CD4-positive, alpha-beta memory T cell (primary cell): ENCODE measurements at regions of chr3 and their contacts with region 1.

Region 1: GRCh38 chr3:56702490-56703315 is 19.6 kb upstream of the TASOR start:
- DNase-seq: peak; percentile 57 to 70 (median 66)
- H3K4me3 ChIP-seq: no peak overlapping the region
- H3K4me3 Mint-ChIP-seq: no peak overlapping the region
- H3K27ac ChIP-seq: no peak overlapping the region
- H3K27ac Mint-ChIP-seq: peak overlapping the region in 3 of 7 donors; percentile 15 to 42 (median 32)
- H3K4me1 ChIP-seq: peaks cover 16% of the 10 kb centered on the region
- H3K4me1 Mint-ChIP-seq: peaks cover 11 to 21% (median 13%) of the 10 kb centered on the region in 4 donors
- H3K27me3 ChIP-seq: no peaks in the 10 kb centered on the region
- H3K27me3 Mint-ChIP-seq: no peaks in the 10 kb centered on the region

Region 2: DNA sequence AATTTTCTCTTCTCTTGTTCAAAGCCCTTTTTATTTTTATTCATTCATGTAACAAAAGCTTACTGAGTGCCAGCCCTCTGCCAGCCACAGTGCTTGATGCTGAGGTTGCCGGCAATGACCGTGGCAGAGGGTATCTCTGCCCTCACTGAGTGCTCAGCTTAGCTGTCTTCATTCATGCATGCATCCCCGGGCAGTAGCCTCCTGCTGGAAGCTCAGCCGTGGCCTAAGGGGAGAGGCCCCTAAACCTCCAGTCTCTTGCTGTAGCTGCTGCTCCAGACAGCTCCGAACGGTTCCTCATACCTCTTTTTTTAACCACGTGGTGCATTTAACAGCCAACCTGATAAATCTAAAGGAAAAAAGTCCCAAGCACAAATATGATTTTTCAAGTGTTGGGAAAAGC is 180.3 kb before region 1 on chr3:
- CTCF ChIA-PET with region 1: no interaction called
- POLR2A ChIA-PET with region 1: no interaction called
- intact Hi-C with region 1: no loop called
- DNase-seq: no peak
- H3K4me3 ChIP-seq: no peak overlapping the region
- H3K4me3 Mint-ChIP-seq: no peak overlapping the region
- H3K27ac ChIP-seq: no peak overlapping the region
- H3K27ac Mint-ChIP-seq: no peak overlapping the region
- H3K4me1 ChIP-seq: no peaks in the 10 kb centered on the region
- H3K4me1 Mint-ChIP-seq: no peaks in the 10 kb centered on the region
- H3K27me3 ChIP-seq: no peaks in the 10 kb centered on the region
- H3K27me3 Mint-ChIP-seq: peaks cover 6 to 12% of the 10 kb centered on the region in 2 donors

Region 3: GRCh38 chr3:56682462-56683121 is 20.1 kb before region 1 on chr3:
- CTCF ChIA-PET with region 1: interaction called, 5 read pairs
- POLR2A ChIA-PET with region 1: interaction called, 10 read pairs
- intact Hi-C with region 1: loop called (anchors 2 kb)
- DNase-seq: peak; percentile 79 to 86 (median 85)
- H3K4me3 ChIP-seq: peak overlapping the region; percentile 76 to 90
- H3K4me3 Mint-ChIP-seq: peak overlapping the region; percentile 91 to 98 (median 94)
- H3K27ac ChIP-seq: peak overlapping the region; percentile 96
- H3K27ac Mint-ChIP-seq: peak overlapping the region; percentile 93 to 98 (median 96)
- H3K4me1 ChIP-seq: peaks cover 55% of the 10 kb centered on the region
- H3K4me1 Mint-ChIP-seq: peaks cover 28 to 59% (median 42%) of the 10 kb centered on the region in 4 donors
- H3K27me3 ChIP-seq: no peaks in the 10 kb centered on the region
- H3K27me3 Mint-ChIP-seq: no peaks in the 10 kb centered on the region

Region 4: GRCh38 chr3:56771376-56771775 is 68.7 kb after region 1 on chr3:
- CTCF ChIA-PET with region 1: no interaction called
- POLR2A ChIA-PET with region 1: no interaction called
- intact Hi-C with region 1: no loop called
- DNase-seq: no peak
- H3K4me3 ChIP-seq: no peak overlapping the region
- H3K4me3 Mint-ChIP-seq: peak overlapping the region in 3 of 8 donors; percentile 26 to 43 (median 42)
- H3K27ac ChIP-seq: no peak overlapping the region
- H3K27ac Mint-ChIP-seq: peak overlapping the region; percentile 29 to 83 (median 77)
- H3K4me1 ChIP-seq: peaks cover 54% of the 10 kb centered on the region
- H3K4me1 Mint-ChIP-seq: peaks cover 36 to 75% (median 57%) of the 10 kb centered on the region in 4 donors
- H3K27me3 ChIP-seq: no peaks in the 10 kb centered on the region
- H3K27me3 Mint-ChIP-seq: no peaks in the 10 kb centered on the region

Region 5: DNA sequence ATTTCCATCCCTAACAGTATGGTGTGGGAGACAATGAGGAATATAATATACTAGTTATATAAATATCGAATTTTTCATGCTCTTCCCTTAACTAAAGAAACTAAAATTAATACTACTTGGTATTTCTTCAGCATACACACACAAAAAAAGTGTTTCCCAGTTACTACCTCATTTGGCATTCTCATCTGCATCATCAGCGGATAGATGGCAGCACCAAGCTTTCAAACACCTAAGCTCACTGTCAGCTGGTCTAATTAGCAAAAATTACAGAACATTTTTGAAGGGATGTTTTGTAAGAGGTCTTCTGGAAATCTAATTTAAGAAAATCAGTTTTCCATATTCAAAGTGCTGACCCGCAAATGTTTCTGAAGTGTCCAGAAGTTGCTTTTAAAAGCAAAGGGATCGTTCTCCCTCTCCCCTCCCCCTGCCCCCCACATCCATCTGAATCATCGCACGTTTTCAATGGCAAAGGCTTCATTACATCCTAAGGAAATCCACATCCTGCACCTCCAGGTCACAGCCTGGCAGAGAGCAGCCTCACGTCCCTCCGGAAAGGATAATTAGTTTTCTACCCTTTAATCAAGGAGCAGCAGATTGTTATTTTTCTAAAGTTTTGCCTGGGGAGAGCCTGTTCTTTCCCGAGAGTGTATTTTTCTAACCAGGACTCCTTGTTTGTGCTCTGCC is 271.7 kb after region 1 on chr3:
- CTCF ChIA-PET with region 1: interaction called, 23 read pairs
- POLR2A ChIA-PET with region 1: no interaction called
- intact Hi-C with region 1: no loop called
- DNase-seq: no peak
- H3K4me3 ChIP-seq: no peak overlapping the region
- H3K4me3 Mint-ChIP-seq: no peak overlapping the region
- H3K27ac ChIP-seq: no peak overlapping the region
- H3K27ac Mint-ChIP-seq: no peak overlapping the region
- H3K4me1 ChIP-seq: no peaks in the 10 kb centered on the region
- H3K4me1 Mint-ChIP-seq: no peaks in the 10 kb centered on the region
- H3K27me3 ChIP-seq: no peaks in the 10 kb centered on the region
- H3K27me3 Mint-ChIP-seq: no peaks in the 10 kb centered on the region

Region 6: GRCh38 chr3:56980798-56981390 is 278.2 kb after region 1 on chr3:
- CTCF ChIA-PET with region 1: interaction called, 321 read pairs
- POLR2A ChIA-PET with region 1: interaction called, 4 read pairs
- intact Hi-C with region 1: no loop called
- DNase-seq: no peak
- H3K4me3 ChIP-seq: no peak overlapping the region
- H3K4me3 Mint-ChIP-seq: no peak overlapping the region
- H3K27ac ChIP-seq: no peak overlapping the region
- H3K27ac Mint-ChIP-seq: no peak overlapping the region
- H3K4me1 ChIP-seq: no peaks in the 10 kb centered on the region
- H3K4me1 Mint-ChIP-seq: peaks cover 3 to 12% (median 8%) of the 10 kb centered on the region in 4 donors
- H3K27me3 ChIP-seq: no peaks in the 10 kb centered on the region
- H3K27me3 Mint-ChIP-seq: no peaks in the 10 kb centered on the region

Region 7: GRCh38 chr3:56997675-56998074 is 295.0 kb after region 1 on chr3:
- CTCF ChIA-PET with region 1: interaction called, 321 read pairs
- POLR2A ChIA-PET with region 1: no interaction called
- intact Hi-C with region 1: no loop called
- DNase-seq: no peak
- H3K4me3 ChIP-seq: no peak overlapping the region
- H3K4me3 Mint-ChIP-seq: no peak overlapping the region
- H3K27ac ChIP-seq: no peak overlapping the region
- H3K27ac Mint-ChIP-seq: peak overlapping the region in 1 of 7 donors; percentile 90
- H3K4me1 ChIP-seq: no peaks in the 10 kb centered on the region
- H3K4me1 Mint-ChIP-seq: peaks cover 3 to 6% (median 4%) of the 10 kb centered on the region in 4 donors
- H3K27me3 ChIP-seq: no peaks in the 10 kb centered on the region
- H3K27me3 Mint-ChIP-seq: peaks cover 1 to 3% of the 10 kb centered on the region in 2 donors

Region 8: GRCh38 chr3:57100046-57100695 is 397.5 kb after region 1 on chr3:
- CTCF ChIA-PET with region 1: no interaction called
- POLR2A ChIA-PET with region 1: no interaction called
- intact Hi-C with region 1: loop called (anchors 5 kb)
- DNase-seq: peak in 4 of 5 donors; percentile 42 to 56 (median 42)
- H3K4me3 ChIP-seq: no peak overlapping the region
- H3K4me3 Mint-ChIP-seq: no peak overlapping the region
- H3K27ac ChIP-seq: no peak overlapping the region
- H3K27ac Mint-ChIP-seq: peak overlapping the region in 1 of 7 donors; percentile 64
- H3K4me1 ChIP-seq: no peaks in the 10 kb centered on the region
- H3K4me1 Mint-ChIP-seq: peaks cover 0 to 6% (median 3%) of the 10 kb centered on the region in 4 donors
- H3K27me3 ChIP-seq: no peaks in the 10 kb centered on the region
- H3K27me3 Mint-ChIP-seq: peaks cover 0 to 1% of the 10 kb centered on the region in 2 donors